ENCODE measurements at regions of chr15 and their contacts with region 1.

Region 1: GRCh38 chr15:50562735-50563640 is 16.5 kb upstream of the USP50 start:
- DNase-seq: peak; percentile 8
- H3K4me3 Mint-ChIP-seq: no peak overlapping the region
- H3K27ac Mint-ChIP-seq: peak overlapping the region; percentile 75
- H3K4me1 Mint-ChIP-seq: peaks cover 6% of the 10 kb centered on the region
- H3K27me3 Mint-ChIP-seq: no peaks in the 10 kb centered on the region

Region 2: DNA sequence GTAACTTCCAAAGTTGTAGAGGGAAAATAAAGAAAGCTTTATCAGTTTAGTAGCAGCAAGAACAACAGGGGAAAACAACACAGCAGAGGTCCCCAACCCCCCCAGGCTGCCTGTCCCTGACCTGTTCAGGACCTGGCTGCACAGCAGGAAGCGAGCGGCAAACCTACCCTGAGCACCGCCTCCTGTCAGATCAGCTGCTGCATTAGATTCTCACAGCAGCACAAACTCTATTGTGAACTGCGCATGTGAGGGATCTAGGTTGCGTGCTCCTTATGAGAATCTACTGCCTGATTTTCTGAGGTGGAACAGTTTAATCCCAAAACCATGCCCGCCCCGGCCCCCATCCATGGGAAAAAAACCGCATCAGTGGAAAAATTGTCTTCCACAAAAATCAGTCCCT is 56.9 kb before region 1 on chr15:
- CTCF ChIA-PET with region 1: no interaction called
- intact Hi-C with region 1: loop called (anchors 5 kb)
- DNase-seq: no peak
- H3K4me3 Mint-ChIP-seq: no peak overlapping the region
- H3K27ac Mint-ChIP-seq: no peak overlapping the region
- H3K4me1 Mint-ChIP-seq: no peaks in the 10 kb centered on the region
- H3K27me3 Mint-ChIP-seq: no peaks in the 10 kb centered on the region